ENCODE measurements at regions of chr6 and their contacts with region 1.

Region 1: DNA sequence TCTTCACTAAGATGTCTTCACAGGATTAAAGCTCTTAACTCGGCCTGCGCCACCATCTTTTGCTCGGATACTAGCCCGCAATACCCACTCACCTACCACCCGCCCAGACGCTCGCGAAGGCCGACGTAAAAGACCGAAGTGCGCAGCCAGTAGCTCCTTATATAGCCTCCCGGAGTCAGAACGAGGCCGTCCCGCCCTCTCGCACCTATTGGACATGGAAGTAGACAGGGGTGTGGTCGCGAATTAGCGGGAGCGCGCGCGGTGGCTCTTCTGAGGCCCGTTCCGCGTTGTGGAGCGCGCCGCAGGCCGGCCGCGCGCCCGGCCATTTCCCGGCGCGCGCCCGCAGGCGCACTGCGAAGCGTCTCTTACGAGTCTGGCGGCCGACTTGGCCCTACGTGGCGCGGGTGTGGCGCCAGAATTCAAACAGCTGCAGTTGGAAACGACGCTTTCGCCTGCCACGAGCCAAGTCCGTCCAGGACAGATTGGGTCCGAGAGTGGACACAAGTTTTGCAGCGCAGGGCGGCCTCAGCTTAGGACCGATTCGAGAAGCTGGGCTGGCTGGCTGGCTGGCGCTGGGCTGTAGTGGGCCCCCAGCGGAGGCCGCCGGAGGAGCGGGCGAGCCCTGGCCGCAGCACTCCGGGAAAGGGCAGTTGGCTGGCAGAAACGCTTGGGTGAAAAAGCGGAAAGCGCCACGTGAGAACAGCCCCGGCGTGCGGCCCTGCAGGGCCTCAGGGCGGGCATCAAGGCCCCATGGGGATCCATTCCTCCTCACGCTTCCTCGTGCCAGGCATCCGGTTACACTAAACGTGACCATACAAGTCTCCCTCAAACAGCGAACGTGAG is 36.1 kb upstream of the SYNCRIP start:
- DNase-seq: peak; percentile 97 to 99 (median 98)
- ATAC-seq: peak; percentile 96
- H3K4me3 ChIP-seq: peak overlapping the region; percentile 98
- H3K4me3 Mint-ChIP-seq: peak overlapping the region; percentile 93 to 100 (median 98)
- H3K27ac ChIP-seq: peak overlapping the region; percentile 93
- H3K27ac Mint-ChIP-seq: peak overlapping the region; percentile 96 to 100 (median 99)
- H3K4me1 ChIP-seq: peaks cover 23 to 26% of the 10 kb centered on the region in 2 donors
- H3K4me1 Mint-ChIP-seq: peaks cover 26 to 51% (median 40%) of the 10 kb centered on the region in 7 donors
- H3K27me3 ChIP-seq: no peaks in the 10 kb centered on the region
- H3K27me3 Mint-ChIP-seq: peaks cover 0 to 4% (median 0%) of the 10 kb centered on the region in 5 donors

Region 2: GRCh38 chr6:85354761-85355618 is 323.8 kb before region 1 on chr6:
- CTCF ChIA-PET with region 1: no interaction called
- POLR2A ChIA-PET with region 1: no interaction called
- intact Hi-C with region 1: loop called in 1 of 2 experiments (anchors 2 kb)
- DNase-seq: peak in 8 of 9 donors; percentile 10 to 63 (median 38)
- ATAC-seq: peak; percentile 70
- H3K4me3 ChIP-seq: no peak overlapping the region
- H3K4me3 Mint-ChIP-seq: no peak overlapping the region
- H3K27ac ChIP-seq: no peak overlapping the region
- H3K27ac Mint-ChIP-seq: no peak overlapping the region
- H3K4me1 ChIP-seq: no peaks in the 10 kb centered on the region
- H3K4me1 Mint-ChIP-seq: peaks cover 0 to 3% (median 0%) of the 10 kb centered on the region in 7 donors
- H3K27me3 ChIP-seq: no peaks in the 10 kb centered on the region
- H3K27me3 Mint-ChIP-seq: peaks cover 12 to 21% (median 18%) of the 10 kb centered on the region in 5 donors

Region 3: DNA sequence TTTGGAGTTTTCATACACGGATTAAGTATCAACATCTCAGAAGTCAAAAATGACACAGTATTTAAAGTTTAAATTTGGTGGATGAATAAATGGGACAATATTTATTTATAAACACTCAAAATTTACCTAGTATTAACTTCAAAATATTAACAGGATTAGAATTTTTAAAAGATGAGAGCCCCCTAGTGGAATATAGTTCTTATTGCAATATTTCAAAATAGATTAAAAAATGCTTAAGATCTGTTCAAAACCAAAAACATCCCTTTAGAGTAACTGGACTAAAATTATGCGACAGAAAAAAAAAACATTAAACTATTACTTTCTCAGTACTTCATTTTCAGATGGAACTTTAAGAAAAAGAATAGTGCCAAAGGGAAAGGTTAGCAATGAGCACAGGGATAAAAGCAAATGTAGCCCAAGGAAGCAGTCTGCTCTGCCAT is 141.7 kb before region 1 on chr6:
- CTCF ChIA-PET with region 1: no interaction called
- POLR2A ChIA-PET with region 1: interaction called, 7 read pairs
- intact Hi-C with region 1: loop called in 1 of 2 experiments (anchors 1 kb)
- DNase-seq: peak in 3 of 9 donors; percentile 1 to 15 (median 4)
- ATAC-seq: no peak
- H3K4me3 ChIP-seq: no peak overlapping the region
- H3K4me3 Mint-ChIP-seq: no peak overlapping the region
- H3K27ac ChIP-seq: no peak overlapping the region
- H3K27ac Mint-ChIP-seq: peak overlapping the region in 4 of 9 donors; percentile 25 to 68 (median 54)
- H3K4me1 ChIP-seq: no peaks in the 10 kb centered on the region
- H3K4me1 Mint-ChIP-seq: peaks cover 0 to 4% (median 0%) of the 10 kb centered on the region in 7 donors
- H3K27me3 ChIP-seq: no peaks in the 10 kb centered on the region
- H3K27me3 Mint-ChIP-seq: no peaks in the 10 kb centered on the region

Region 4: GRCh38 chr6:85620308-85620707 is 58.5 kb before region 1 on chr6:
- CTCF ChIA-PET with region 1: no interaction called
- POLR2A ChIA-PET with region 1: interaction called, 6 read pairs
- intact Hi-C with region 1: loop called (anchors 10 kb)
- DNase-seq: no peak
- ATAC-seq: no peak
- H3K4me3 ChIP-seq: no peak overlapping the region
- H3K4me3 Mint-ChIP-seq: no peak overlapping the region
- H3K27ac ChIP-seq: no peak overlapping the region
- H3K27ac Mint-ChIP-seq: peak overlapping the region in 4 of 9 donors; percentile 1 to 52 (median 16)
- H3K4me1 ChIP-seq: no peaks in the 10 kb centered on the region
- H3K4me1 Mint-ChIP-seq: peaks cover 18 to 42% (median 30%) of the 10 kb centered on the region in 7 donors
- H3K27me3 ChIP-seq: no peaks in the 10 kb centered on the region
- H3K27me3 Mint-ChIP-seq: no peaks in the 10 kb centered on the region

Region 5: GRCh38 chr6:87589693-87590549 is 1911.1 kb after region 1 on chr6 and contains the starts of genes ORC3 and RARS2:
- CTCF ChIA-PET with region 1: no interaction called
- POLR2A ChIA-PET with region 1: no interaction called
- intact Hi-C with region 1: loop called in 1 of 2 experiments (anchors 5 kb)
- DNase-seq: peak; percentile 86 to 97 (median 92)
- ATAC-seq: peak; percentile 100
- H3K4me3 ChIP-seq: peak within 1 kb of the TSS; percentile 89
- H3K4me3 Mint-ChIP-seq: peak within 1 kb of the TSS; percentile 87 to 100 (median 96)
- H3K27ac ChIP-seq: peak within 1 kb of the TSS; percentile 92
- H3K27ac Mint-ChIP-seq: peak within 1 kb of the TSS; percentile 87 to 97 (median 95)
- H3K4me1 ChIP-seq: peaks cover 22 to 32% of the 10 kb centered on the region in 2 donors
- H3K4me1 Mint-ChIP-seq: peaks cover 49 to 81% (median 75%) of the 10 kb centered on the region in 7 donors
- H3K27me3 ChIP-seq: no peaks in the 10 kb centered on the region
- H3K27me3 Mint-ChIP-seq: no peaks in the 10 kb centered on the region
- total RNA-seq, gene ORC3: 17.7 to 29.8 (median 27.6) TPM
- total RNA-seq, gene RARS2: 21.0 to 40.0 (median 24.2) TPM